HEK293 (cell line): ENCODE measurements at regions of chr3 and their contacts with region 1.

Region 1: GRCh38 chr3:148727247-148727646 is 29.5 kb downstream of the AGTR1 start:
- H3K4me3 ChIP-seq: no peak overlapping the region
- H3K27ac ChIP-seq: no peak overlapping the region
- H3K4me1 ChIP-seq: no peaks in the 10 kb centered on the region
- CTCF ChIP-seq: 0 out of 2 replicates have a peak, but pooled peaks have one; percentile 14

Region 2: DNA sequence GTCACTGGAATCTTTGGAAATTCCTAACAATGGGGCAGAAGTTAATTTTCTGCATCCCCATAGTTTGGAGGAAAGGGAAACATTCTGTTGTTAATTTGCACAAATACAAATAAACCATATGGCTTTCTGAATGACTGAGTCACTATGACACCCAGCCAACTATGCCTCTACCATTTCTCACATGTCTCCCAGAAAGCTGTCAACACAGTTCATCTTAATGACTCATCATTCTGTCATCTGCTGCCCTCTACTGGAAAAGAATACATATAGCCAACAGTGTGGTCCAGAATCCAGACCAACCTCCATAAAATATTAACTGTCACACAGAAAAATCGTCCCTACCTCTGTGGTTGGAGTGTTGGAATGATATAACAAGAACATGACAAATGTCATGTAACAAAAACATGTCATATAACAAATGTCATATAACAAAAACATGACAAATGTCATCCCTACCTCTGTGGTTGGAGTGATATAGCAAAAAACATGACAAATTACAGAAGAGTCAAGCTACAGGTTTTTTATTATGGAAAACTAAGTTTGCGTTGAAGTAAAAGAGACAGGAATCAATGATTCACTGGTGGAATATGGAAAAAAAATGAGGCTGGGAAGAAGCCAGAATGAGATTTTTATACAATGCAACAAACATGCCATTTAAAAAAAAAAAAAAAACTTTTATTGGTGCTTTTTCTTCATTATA is 216.4 kb after region 1 on chr3:
- CTCF ChIA-PET with region 1: interaction called, 47 read pairs
- POLR2A ChIA-PET with region 1: no interaction called
- H3K4me3 ChIP-seq: no peak overlapping the region
- H3K27ac ChIP-seq: no peak overlapping the region
- H3K4me1 ChIP-seq: no peaks in the 10 kb centered on the region
- CTCF ChIP-seq: peak; percentile 51; the same call in 1 of the 2 replicates